Motor neuron (in vitro differentiated cells): ENCODE measurements at regions of chr7 and their contacts with region 1.

Region 1: GRCh38 chr7:26500749-26501352 is 209.2 kb downstream of the SNX10 start:
- ATAC-seq: peak in 3 of 8 experiments; percentile 55 to 73 (median 66)
- H3K4me3 ChIP-seq: no peak overlapping the region
- H3K27ac ChIP-seq: no peak overlapping the region
- H3K4me1 ChIP-seq: peaks cover 0 to under 1% of the 10 kb centered on the region in 2 donors

Region 2: GRCh38 chr7:26376175-26376917 is 124.5 kb before region 1 on chr7:
- in situ Hi-C with region 1: loop called in 2 of 9 experiments (anchors 10 to 25 kb)
- ATAC-seq: peak; percentile 66 to 80 (median 77)
- H3K4me3 ChIP-seq: peak overlapping the region; percentile 45 to 69 (median 56)
- H3K27ac ChIP-seq: peak overlapping the region; percentile 96
- H3K4me1 ChIP-seq: peaks cover 16 to 33% of the 10 kb centered on the region in 2 donors

Region 3: GRCh38 chr7:26398756-26399501 is 101.9 kb before region 1 on chr7:
- in situ Hi-C with region 1: loop called in 1 of 9 experiments (anchors 25 kb)
- ATAC-seq: peak; percentile 36 to 70 (median 46)
- H3K4me3 ChIP-seq: peak overlapping the region; percentile 38 to 53 (median 48)
- H3K27ac ChIP-seq: peak overlapping the region; percentile 92 to 98
- H3K4me1 ChIP-seq: peaks cover 19 to 37% of the 10 kb centered on the region in 2 donors

Region 4: DNA sequence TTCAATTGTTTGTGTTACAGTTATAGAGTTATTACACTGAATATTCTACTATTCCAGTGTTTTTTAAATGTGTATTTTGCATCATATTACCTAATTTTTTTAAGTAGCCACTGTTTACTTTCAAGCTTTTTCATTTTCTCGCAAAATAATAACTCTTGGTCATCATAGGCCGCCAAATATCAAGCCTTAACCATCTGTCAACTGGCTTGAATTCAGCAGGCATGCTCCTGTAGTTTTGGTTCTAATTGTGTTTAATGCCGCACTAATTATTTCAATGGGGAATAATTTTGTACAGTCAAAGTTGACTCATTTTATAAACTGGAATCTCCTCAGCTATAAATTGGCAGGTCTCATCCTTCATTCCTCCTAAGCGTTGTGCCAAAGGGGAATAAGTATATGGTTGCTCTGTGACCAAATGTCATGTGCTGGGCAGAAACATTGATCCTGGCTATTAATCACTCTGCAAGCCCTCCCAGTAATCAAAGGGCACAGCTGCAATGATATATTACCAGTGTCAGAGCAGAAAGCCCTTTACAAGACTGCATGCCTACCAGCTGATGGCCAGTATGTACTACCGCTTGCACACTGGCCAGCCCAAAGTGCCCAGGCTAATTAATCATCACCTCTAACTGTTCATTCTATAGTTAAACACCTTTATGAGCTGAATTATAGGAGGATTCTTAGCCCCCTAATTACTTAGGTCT is 288.8 kb after region 1 on chr7:
- in situ Hi-C with region 1: no loop called
- ATAC-seq: peak in 5 of 8 experiments; percentile 92 to 98 (median 95)
- H3K4me3 ChIP-seq: no peak overlapping the region
- H3K27ac ChIP-seq: no peak overlapping the region
- H3K4me1 ChIP-seq: peaks cover 13 to 36% of the 10 kb centered on the region in 2 donors